ENCODE measurements at regions of chr2 and their contacts with region 1.

Region 1: DNA sequence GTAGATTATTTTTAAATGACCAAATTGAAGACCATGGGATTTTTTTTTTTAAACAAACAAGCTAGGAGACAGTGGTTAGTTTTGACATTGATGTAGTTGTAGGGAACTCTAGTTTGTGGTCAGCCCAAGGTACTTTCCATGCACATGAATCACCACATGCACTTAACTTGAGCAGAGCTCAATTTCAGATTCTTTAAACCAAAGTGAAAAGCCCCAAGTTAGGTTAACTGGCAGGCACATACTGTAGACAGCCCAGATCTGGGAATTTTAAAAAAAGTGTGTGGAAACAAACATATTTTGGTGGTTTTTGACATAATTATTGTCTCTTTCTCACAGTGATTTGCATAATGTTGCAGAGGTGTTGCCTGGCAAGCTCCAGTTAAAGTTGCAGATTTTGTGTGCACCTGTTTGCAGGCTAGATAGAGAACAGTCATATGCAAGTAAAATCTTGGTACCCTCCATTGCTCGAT is 88.4 kb downstream of the BCL2L11 start:
- DNase-seq: no peak
- ATAC-seq: peak; percentile 91
- H3K4me3 Mint-ChIP-seq: peak overlapping the region; percentile 35
- H3K27ac Mint-ChIP-seq: peak overlapping the region; percentile 80
- H3K4me1 Mint-ChIP-seq: peaks cover 37% of the 10 kb centered on the region
- H3K27me3 Mint-ChIP-seq: no peaks in the 10 kb centered on the region
- CTCF ChIP-seq: no peak

Region 2: GRCh38 chr2:110796787-110797186 is 412.3 kb before region 1 on chr2:
- CTCF ChIA-PET with region 1: no interaction called
- POLR2A ChIA-PET with region 1: no interaction called
- intact Hi-C with region 1: no loop called
- DNase-seq: no peak
- ATAC-seq: no peak
- H3K4me3 Mint-ChIP-seq: no peak overlapping the region
- H3K27ac Mint-ChIP-seq: no peak overlapping the region
- H3K4me1 Mint-ChIP-seq: peaks cover 3% of the 10 kb centered on the region
- H3K27me3 Mint-ChIP-seq: peaks cover 61% of the 10 kb centered on the region
- CTCF ChIP-seq: no peak

Region 3: DNA sequence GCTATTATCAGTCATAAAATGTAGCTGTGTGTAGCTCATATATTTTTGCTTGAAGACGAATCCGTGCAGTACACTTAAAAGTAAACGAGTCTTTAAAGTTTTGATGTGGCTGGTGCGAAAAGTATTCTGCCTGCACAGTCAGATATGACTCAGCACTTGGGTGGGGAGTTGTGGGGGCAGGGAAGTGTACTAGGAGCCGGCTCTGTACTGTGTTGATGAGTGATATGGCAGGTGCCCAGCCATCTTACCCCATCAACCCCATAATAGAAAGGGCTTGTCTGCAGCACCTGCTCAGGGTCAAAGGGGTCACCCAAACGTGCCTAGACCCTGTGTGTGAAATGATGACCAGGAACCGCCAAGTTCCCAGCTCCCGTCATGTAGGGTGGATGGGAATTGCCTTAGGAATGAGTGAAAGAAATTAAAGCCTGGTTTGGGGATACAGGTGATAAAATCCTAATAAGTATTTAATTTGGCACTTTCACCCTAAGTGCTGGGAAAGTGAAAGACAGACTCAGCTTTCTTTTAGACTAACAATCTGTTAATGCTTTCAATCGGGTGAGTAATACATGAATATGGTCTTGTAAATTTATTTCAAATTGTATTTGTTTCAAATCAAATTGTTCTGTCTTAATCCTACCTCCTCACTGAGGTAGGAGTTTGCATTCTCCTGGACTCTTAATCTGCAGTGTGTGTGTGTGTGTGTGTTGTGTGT is 40.4 kb before region 1 on chr2:
- CTCF ChIA-PET with region 1: no interaction called
- POLR2A ChIA-PET with region 1: interaction called, 10 read pairs
- intact Hi-C with region 1: no loop called
- DNase-seq: no peak
- ATAC-seq: peak; percentile 59
- H3K4me3 Mint-ChIP-seq: no peak overlapping the region
- H3K27ac Mint-ChIP-seq: no peak overlapping the region
- H3K4me1 Mint-ChIP-seq: peaks cover 25% of the 10 kb centered on the region
- H3K27me3 Mint-ChIP-seq: no peaks in the 10 kb centered on the region
- CTCF ChIP-seq: no peak

Region 4: GRCh38 chr2:111194835-111195621 is 14.1 kb before region 1 on chr2:
- CTCF ChIA-PET with region 1: no interaction called
- POLR2A ChIA-PET with region 1: interaction called, 8 read pairs
- intact Hi-C with region 1: loop called (anchors 2 kb)
- DNase-seq: no peak
- ATAC-seq: peak; percentile 78
- H3K4me3 Mint-ChIP-seq: peak overlapping the region; percentile 6
- H3K27ac Mint-ChIP-seq: peak overlapping the region; percentile 37
- H3K4me1 Mint-ChIP-seq: peaks cover 43% of the 10 kb centered on the region
- H3K27me3 Mint-ChIP-seq: no peaks in the 10 kb centered on the region
- CTCF ChIP-seq: no peak

Region 5: DNA sequence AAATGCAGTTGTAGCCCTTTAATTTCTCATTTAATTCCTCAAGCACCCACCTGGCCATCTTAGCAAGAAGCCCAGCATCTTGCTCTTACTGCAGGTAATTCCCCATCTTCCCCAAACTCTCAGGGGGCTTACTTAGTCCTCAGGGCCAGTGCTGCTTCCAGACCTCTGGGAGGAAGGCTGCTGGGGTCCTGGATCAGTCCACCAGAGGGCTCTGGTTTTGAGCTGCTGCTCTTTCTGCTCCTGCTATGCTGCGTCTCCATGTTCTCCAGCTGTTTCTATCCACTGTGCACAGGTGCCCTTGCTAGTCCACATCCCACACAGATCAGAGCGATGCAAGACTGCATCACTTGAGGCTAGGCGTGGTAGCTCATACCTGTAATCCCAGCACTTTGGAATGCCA is 811.5 kb after region 1 on chr2:
- CTCF ChIA-PET with region 1: no interaction called
- POLR2A ChIA-PET with region 1: no interaction called
- intact Hi-C with region 1: no loop called
- DNase-seq: no peak
- ATAC-seq: no peak
- H3K4me3 Mint-ChIP-seq: no peak overlapping the region
- H3K27ac Mint-ChIP-seq: no peak overlapping the region
- H3K4me1 Mint-ChIP-seq: no peaks in the 10 kb centered on the region
- H3K27me3 Mint-ChIP-seq: peaks cover 11% of the 10 kb centered on the region
- CTCF ChIP-seq: no peak